CD4-positive, alpha-beta T cell (primary cell): ENCODE measurements at regions of chr3 and their contacts with region 1.

Region 1: GRCh38 chr3:194472290-194472920 is 14.4 kb downstream of the ATP13A3 start:
- DNase-seq: peak in 6 of 14 experiments; percentile 16 to 76 (median 52)
- ATAC-seq: peak; percentile 98
- H3K4me3 ChIP-seq: no peak overlapping the region
- H3K4me3 Mint-ChIP-seq: no peak overlapping the region
- H3K27ac ChIP-seq: no peak overlapping the region
- H3K27ac Mint-ChIP-seq: no peak overlapping the region
- H3K4me1 ChIP-seq: no peaks in the 10 kb centered on the region
- H3K4me1 Mint-ChIP-seq: peaks cover 11% of the 10 kb centered on the region
- H3K27me3 ChIP-seq: no peaks in the 10 kb centered on the region
- H3K27me3 Mint-ChIP-seq: no peaks in the 10 kb centered on the region
- CTCF ChIP-seq: peak; percentile 99

Region 2: GRCh38 chr3:194486540-194487288 is 14.3 kb after region 1 on chr3 and contains the start of gene ATP13A3:
- CTCF ChIA-PET with region 1: interaction called, 18 read pairs
- POLR2A ChIA-PET with region 1: interaction called, 8 read pairs
- intact Hi-C with region 1: no loop called
- DNase-seq: peak; percentile 78 to 97 (median 90)
- ATAC-seq: peak; percentile 83
- H3K4me3 ChIP-seq: peak within 1 kb of the TSS; percentile 81
- H3K4me3 Mint-ChIP-seq: peak within 1 kb of the TSS; percentile 97
- H3K27ac ChIP-seq: peak within 1 kb of the TSS; percentile 66 to 76
- H3K27ac Mint-ChIP-seq: peak within 1 kb of the TSS; percentile 89
- H3K4me1 ChIP-seq: peaks cover 34% of the 10 kb centered on the region
- H3K4me1 Mint-ChIP-seq: peaks cover 44% of the 10 kb centered on the region
- H3K27me3 ChIP-seq: no peaks in the 10 kb centered on the region
- H3K27me3 Mint-ChIP-seq: no peaks in the 10 kb centered on the region
- CTCF ChIP-seq: no peak
- total RNA-seq, gene ATP13A3: 46.5 to 52.7 TPM

Region 3: GRCh38 chr3:194512895-194513601 is 40.6 kb after region 1 on chr3:
- CTCF ChIA-PET with region 1: interaction called, 5 read pairs
- POLR2A ChIA-PET with region 1: no interaction called
- intact Hi-C with region 1: loop called in 1 of 2 experiments (anchors 5 kb)
- DNase-seq: no peak
- ATAC-seq: no peak
- H3K4me3 ChIP-seq: no peak overlapping the region
- H3K4me3 Mint-ChIP-seq: no peak overlapping the region
- H3K27ac ChIP-seq: no peak overlapping the region
- H3K27ac Mint-ChIP-seq: no peak overlapping the region
- H3K4me1 ChIP-seq: no peaks in the 10 kb centered on the region
- H3K4me1 Mint-ChIP-seq: no peaks in the 10 kb centered on the region
- H3K27me3 ChIP-seq: no peaks in the 10 kb centered on the region
- H3K27me3 Mint-ChIP-seq: no peaks in the 10 kb centered on the region
- CTCF ChIP-seq: no peak

Region 4: DNA sequence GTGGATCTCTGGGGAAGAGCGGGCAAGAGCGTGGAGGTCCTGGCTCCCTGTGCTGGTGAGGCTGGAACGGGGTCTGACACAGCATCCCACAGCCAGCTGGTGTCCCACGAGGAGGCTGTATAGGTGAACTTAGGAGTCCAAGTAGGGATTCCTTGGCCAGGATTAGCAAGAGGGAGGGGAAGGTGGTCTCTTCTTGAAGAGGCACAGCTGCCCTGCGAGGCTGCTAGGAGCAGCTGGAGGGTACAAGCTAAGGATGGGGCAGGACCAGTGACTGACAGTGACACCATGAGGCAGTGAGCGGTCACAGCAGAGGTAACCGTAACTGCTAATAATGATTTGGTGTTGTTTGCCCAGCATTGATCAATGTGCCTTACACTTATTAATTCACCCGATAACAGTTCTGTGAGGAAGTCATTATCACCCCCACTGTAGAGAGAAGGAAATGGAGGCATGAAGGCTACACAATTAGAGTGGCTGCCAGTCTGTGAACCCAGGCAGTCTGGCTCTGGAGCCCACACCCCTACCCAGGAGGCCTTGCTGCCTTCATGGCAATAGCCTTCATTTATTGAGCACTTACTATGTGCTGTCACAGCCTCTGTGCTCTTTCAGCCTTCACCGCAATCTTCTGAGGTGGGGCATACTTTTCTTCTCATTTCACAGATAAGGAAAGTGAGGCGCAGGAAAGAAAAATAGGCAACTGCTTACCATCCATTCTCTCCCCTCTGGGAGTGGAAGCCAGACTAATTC is 101.5 kb after region 1 on chr3:
- CTCF ChIA-PET with region 1: interaction called, 13 read pairs
- POLR2A ChIA-PET with region 1: interaction called, 3 read pairs
- intact Hi-C with region 1: loop called (anchors 1 to 2 kb)
- DNase-seq: peak in 12 of 14 experiments; percentile 11 to 66 (median 17)
- ATAC-seq: peak; percentile 90
- H3K4me3 ChIP-seq: no peak overlapping the region
- H3K4me3 Mint-ChIP-seq: no peak overlapping the region
- H3K27ac ChIP-seq: no peak overlapping the region
- H3K27ac Mint-ChIP-seq: no peak overlapping the region
- H3K4me1 ChIP-seq: no peaks in the 10 kb centered on the region
- H3K4me1 Mint-ChIP-seq: no peaks in the 10 kb centered on the region
- H3K27me3 ChIP-seq: peaks cover 0 to 10% of the 10 kb centered on the region in 2 experiments
- H3K27me3 Mint-ChIP-seq: peaks cover 34% of the 10 kb centered on the region
- CTCF ChIP-seq: peak; percentile 37

Region 5: GRCh38 chr3:194592798-194593752 is 120.7 kb after region 1 on chr3:
- CTCF ChIA-PET with region 1: interaction called, 6 read pairs
- POLR2A ChIA-PET with region 1: interaction called, 6 read pairs
- intact Hi-C with region 1: loop called (anchors 1 kb)
- DNase-seq: no peak
- ATAC-seq: no peak
- H3K4me3 ChIP-seq: no peak overlapping the region
- H3K4me3 Mint-ChIP-seq: no peak overlapping the region
- H3K27ac ChIP-seq: no peak overlapping the region
- H3K27ac Mint-ChIP-seq: no peak overlapping the region
- H3K4me1 ChIP-seq: no peaks in the 10 kb centered on the region
- H3K4me1 Mint-ChIP-seq: peaks cover 6% of the 10 kb centered on the region
- H3K27me3 ChIP-seq: no peaks in the 10 kb centered on the region
- H3K27me3 Mint-ChIP-seq: no peaks in the 10 kb centered on the region
- CTCF ChIP-seq: no peak